ENCODE measurements at regions of chr2 and their contacts with region 1.

Region 1: DNA sequence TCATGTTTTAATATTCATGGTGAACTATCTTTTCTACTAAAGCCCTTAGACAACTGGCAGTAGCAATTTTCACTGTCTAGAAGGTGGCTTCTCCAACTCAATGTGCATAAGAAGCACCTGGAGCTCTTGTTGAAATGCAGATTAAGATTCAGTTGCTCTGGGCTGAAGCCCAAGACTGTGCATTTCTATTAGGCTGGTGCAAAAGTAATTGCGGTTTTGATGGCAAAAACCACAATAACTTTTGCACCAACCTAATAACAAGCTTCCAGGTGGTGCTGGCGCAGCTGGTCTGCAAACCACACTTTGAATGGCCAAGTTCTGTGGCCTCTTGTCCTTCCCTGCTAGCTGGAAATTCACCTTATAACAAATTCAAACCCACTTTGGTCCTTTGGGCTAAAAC is 26.7 kb upstream of the VPS54 start:
- DNase-seq: no peak
- H3K4me3 ChIP-seq: no peak overlapping the region
- H3K27ac ChIP-seq: no peak overlapping the region
- H3K4me1 ChIP-seq: no peaks in the 10 kb centered on the region
- H3K27me3 ChIP-seq: no peaks in the 10 kb centered on the region
- CTCF ChIP-seq: no peak

Region 2: DNA sequence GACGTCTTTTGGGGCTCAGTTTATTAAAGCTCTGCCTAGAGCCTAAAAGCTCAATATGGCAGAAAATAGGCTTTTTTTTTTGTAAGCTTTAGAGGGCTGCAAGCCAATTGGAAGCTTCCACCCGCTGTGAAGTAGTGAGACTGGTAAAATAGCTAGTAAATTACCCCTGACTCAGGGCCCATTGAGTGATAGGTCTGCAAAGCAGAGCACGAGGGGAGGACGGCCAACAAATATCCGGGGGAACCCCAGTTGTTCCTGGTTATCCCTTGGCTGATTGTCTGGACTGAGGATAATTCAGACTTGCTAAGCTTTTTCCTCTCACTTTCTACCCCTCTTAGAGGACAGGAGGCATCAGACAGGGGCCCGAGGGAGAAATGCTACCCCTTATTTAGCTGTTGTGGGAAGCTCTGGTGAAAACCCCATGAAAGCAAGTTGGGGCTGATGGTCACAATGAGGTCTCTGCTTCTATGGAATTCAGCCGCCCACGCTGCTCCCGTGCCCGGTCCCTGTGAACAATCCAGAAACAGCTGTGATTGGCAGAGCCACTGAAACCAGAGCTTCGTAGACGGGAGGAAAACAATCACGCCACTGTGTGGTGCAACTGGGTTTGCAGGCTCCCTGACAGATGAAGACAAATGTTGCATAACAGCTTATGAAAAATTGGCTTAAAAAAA is 266.1 kb after region 1 on chr2:
- intact Hi-C with region 1: loop called (anchors 5 kb)
- DNase-seq: peak; percentile 79
- H3K4me3 ChIP-seq: no peak overlapping the region
- H3K27ac ChIP-seq: no peak overlapping the region
- H3K4me1 ChIP-seq: no peaks in the 10 kb centered on the region
- H3K27me3 ChIP-seq: no peaks in the 10 kb centered on the region
- CTCF ChIP-seq: peak; percentile 52

Region 3: DNA sequence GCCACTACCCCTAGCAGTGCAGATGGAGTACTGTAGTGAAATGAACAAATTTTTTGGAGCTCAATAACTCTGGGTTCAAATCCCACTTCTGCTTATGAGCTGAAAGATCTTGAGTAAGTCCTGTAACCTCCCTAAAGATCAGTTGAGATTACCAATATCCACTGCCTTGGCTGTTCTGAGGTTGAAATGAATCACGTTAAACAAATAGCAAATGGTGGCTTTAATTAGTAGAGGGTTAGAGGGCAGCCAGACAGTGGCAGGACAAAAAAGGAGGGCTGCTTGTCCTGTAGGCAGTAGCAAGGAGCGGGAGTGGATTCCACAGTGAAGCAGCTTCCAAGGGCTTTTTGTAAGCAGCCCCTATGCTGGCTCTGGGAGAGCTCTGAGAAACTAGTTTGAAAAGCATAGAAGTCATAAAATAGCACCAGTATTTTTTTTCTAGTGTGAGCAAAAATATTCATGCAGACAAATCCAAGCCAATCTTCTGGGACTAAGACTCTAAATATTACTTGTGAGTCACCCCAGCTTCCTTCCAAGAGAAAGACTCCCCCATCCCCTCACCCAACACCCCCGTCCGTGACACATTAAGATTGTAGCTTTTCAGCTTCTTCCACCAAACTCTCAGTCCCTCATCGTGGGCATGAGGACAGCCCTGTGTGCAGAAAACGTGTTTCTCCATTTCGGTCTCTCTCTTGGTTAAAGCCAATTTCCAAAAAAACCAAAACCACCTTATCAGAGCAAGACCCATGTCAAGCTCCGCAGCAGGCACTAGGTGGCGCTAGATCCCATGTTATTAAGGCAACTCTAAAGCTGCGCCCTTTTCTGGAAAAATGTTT is 284.6 kb after region 1 on chr2:
- intact Hi-C with region 1: loop called (anchors 5 kb)
- DNase-seq: peak; percentile 85
- H3K4me3 ChIP-seq: peak overlapping the region; percentile 3
- H3K27ac ChIP-seq: peak overlapping the region; percentile 71
- H3K4me1 ChIP-seq: peaks cover 3% of the 10 kb centered on the region
- H3K27me3 ChIP-seq: no peaks in the 10 kb centered on the region
- CTCF ChIP-seq: peak; percentile 88

Region 4: DNA sequence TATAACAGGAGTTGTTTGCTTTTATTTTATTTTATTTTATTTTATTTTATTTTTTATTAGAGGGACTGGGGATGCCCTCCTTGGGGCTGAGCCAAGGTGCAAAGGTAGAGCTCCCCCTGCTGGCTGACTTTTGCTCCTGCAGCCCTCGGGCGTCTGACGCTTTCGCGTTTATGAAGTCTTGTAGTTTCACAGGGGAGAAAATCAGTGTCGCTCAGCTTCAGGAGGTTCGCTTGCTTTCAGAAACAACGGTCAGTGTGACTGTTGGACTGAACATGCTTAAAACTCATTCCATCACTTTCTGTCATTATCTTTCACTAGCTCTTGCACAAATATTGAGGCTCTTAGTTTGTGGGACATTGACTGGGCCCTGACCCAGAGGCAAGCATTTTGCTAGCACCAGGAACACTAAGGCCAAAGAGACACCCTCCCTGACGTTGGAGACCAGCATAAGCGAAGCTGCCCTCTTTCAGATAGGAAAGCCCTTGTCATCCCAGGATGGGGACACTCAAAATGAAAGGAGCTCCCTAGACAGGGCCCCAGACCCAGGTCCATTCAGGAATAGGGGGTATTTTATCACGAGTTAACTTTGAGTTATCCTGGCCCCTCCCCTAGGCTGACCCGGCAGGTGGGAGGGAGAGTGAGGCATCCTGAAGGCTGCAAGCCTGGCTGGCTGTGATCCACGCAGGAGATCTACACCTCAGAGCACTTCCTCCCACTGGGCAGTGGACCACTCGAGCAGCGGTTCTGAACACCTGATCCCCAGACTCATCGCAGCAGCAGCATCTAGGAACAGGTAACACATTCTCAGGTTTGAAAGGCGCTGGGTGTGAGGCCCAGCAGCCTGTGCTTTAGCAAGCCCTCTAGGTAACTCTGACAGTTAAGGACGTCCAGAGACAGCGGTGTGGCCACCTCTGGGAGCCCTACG is 442.4 kb after region 1 on chr2:
- intact Hi-C with region 1: loop called (anchors 5 kb)
- DNase-seq: peak; percentile 84
- H3K4me3 ChIP-seq: no peak overlapping the region
- H3K27ac ChIP-seq: no peak overlapping the region
- H3K4me1 ChIP-seq: no peaks in the 10 kb centered on the region
- H3K27me3 ChIP-seq: no peaks in the 10 kb centered on the region
- CTCF ChIP-seq: peak; percentile 99